ENCODE measurements at regions of chr10 and their contacts with region 1.

Region 1: GRCh38 chr10:103659674-103660363 is 166.3 kb downstream of the NEURL1 start:
- DNase-seq: peak; percentile 45 to 87
- H3K4me3 ChIP-seq: peak overlapping the region; percentile 61 to 94
- H3K27ac ChIP-seq: peak overlapping the region; percentile 93
- H3K4me1 ChIP-seq: peaks cover 16 to 31% of the 10 kb centered on the region in 2 donors
- H3K27me3 ChIP-seq: no peaks in the 10 kb centered on the region
- CTCF ChIP-seq: no peak

Region 2: GRCh38 chr10:103598654-103599115 is 61.1 kb before region 1 on chr10:
- intact Hi-C with region 1: loop called (anchors 2 kb)
- DNase-seq: no peak
- H3K4me3 ChIP-seq: no peak overlapping the region
- H3K27ac ChIP-seq: no peak overlapping the region
- H3K4me1 ChIP-seq: peaks cover 0 to 11% of the 10 kb centered on the region in 2 donors
- H3K27me3 ChIP-seq: no peaks in the 10 kb centered on the region
- CTCF ChIP-seq: peak; percentile 53 to 71 (median 63)

Region 3: GRCh38 chr10:103620352-103620740 is 39.5 kb before region 1 on chr10:
- intact Hi-C with region 1: loop called (anchors 1 kb)
- DNase-seq: no peak
- H3K4me3 ChIP-seq: peak overlapping the region in 1 of 2 donors; percentile 17
- H3K27ac ChIP-seq: peak overlapping the region; percentile 80
- H3K4me1 ChIP-seq: peaks cover 28 to 56% of the 10 kb centered on the region in 2 donors
- H3K27me3 ChIP-seq: no peaks in the 10 kb centered on the region
- CTCF ChIP-seq: no peak

Region 4: DNA sequence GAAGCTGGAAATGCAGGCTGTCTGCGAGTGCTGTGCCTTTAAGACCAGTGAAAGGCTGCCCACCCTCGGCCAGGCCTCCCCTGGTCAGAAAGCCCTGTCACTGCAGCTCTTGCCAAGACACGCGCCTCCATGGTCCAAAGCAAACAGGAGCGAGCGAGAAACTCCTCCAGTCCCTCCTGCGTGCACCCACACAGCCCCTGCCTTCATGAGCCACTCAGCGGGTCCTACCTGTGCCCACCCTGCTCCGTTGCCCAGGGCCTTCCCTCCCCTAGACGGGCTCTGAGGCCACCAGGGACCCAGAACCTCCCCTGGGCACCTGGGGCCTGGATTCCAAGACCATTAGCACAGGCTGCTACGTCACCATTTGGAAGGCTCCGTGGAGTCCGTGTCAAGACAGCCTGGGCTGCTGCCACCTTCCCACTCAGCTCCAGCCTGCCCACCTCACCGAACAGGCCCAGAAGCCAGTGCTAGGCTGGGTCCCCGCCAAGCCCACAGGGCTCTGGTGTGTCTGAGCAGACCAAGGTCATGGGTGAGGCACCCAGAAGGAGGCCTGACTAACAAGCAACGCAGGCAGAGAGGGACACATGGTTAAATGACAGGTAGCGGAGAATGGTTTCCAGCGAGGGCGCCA is 21.8 kb before region 1 on chr10:
- intact Hi-C with region 1: loop called (anchors 1 kb)
- DNase-seq: peak; percentile 96 to 99
- H3K4me3 ChIP-seq: peak overlapping the region in 1 of 2 donors; percentile 48
- H3K27ac ChIP-seq: peak overlapping the region; percentile 91 to 97
- H3K4me1 ChIP-seq: peaks cover 24 to 48% of the 10 kb centered on the region in 2 donors
- H3K27me3 ChIP-seq: no peaks in the 10 kb centered on the region
- CTCF ChIP-seq: no peak

Measured in ascending aorta (tissue), 2 donors.